CD4-positive, alpha-beta memory T cell (primary cell): ENCODE measurements at regions of chr21 and their contacts with region 1.

Region 1: GRCh38 chr21:15514073-15514946 is 215.5 kb upstream of the USP25 start:
- DNase-seq: peak; percentile 74 to 84 (median 77)
- H3K4me3 ChIP-seq: peak overlapping the region in 1 of 2 donors; percentile 39
- H3K4me3 Mint-ChIP-seq: peak overlapping the region; percentile 31 to 86 (median 66)
- H3K27ac ChIP-seq: peak overlapping the region; percentile 30
- H3K27ac Mint-ChIP-seq: peak overlapping the region; percentile 19 to 94 (median 87)
- H3K4me1 ChIP-seq: peaks cover 33% of the 10 kb centered on the region
- H3K4me1 Mint-ChIP-seq: peaks cover 17 to 26% (median 23%) of the 10 kb centered on the region in 4 donors
- H3K27me3 ChIP-seq: no peaks in the 10 kb centered on the region
- H3K27me3 Mint-ChIP-seq: no peaks in the 10 kb centered on the region

Region 2: DNA sequence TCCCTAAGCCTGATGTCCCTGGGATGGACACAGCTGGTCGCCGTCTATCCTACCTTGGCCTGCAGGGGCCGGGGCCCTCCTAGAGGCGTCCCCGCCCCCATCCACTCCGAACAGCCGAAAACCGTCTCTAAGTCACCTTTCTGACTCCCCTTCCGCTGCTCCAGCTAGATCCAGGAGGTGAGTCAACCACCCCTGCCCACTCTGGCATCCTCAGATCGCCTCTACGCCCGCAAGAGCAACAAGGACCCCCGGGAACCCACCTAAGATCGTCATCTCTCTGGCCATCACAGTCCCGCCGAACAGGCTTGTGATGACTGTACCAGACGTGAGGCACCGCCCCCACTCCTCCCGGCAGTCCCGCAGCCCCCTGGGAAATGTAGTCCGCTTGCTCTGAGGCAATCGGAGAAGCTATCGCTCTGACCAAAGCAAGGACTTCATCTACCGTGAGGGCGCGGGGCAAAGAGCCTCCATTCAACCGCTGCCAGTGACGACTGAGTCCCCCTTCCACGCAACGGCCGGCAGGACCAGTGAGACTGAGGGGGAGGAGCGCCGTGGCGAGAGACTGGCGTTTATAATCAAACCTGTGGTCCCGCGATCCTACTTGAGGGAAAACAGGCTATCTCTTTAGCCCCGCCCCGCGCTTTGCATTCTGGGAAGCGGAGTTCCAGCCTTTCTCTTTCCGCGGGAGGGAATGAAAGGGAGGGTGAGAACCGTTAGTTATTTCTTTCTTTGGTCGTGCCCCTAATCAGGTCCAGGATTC is 1131.3 kb before region 1 on chr21 and contains the start of gene HSPA13:
- CTCF ChIA-PET with region 1: no interaction called
- POLR2A ChIA-PET with region 1: no interaction called
- intact Hi-C with region 1: loop called (anchors 1 kb)
- DNase-seq: peak; percentile 98 to 100 (median 99)
- H3K4me3 ChIP-seq: peak within 1 kb of the TSS; percentile 77 to 80
- H3K4me3 Mint-ChIP-seq: peak within 1 kb of the TSS; percentile 98 to 100 (median 100)
- H3K27ac ChIP-seq: peak within 1 kb of the TSS; percentile 84
- H3K27ac Mint-ChIP-seq: peak within 1 kb of the TSS; percentile 99 to 100 (median 100)
- H3K4me1 ChIP-seq: peaks cover 35% of the 10 kb centered on the region
- H3K4me1 Mint-ChIP-seq: peaks cover 16 to 51% (median 32%) of the 10 kb centered on the region in 4 donors
- H3K27me3 ChIP-seq: no peaks in the 10 kb centered on the region
- H3K27me3 Mint-ChIP-seq: no peaks in the 10 kb centered on the region
- total RNA-seq, gene HSPA13: 32.0 to 38.5 TPM

Region 3: GRCh38 chr21:15531974-15532373 is 17.7 kb after region 1 on chr21:
- CTCF ChIA-PET with region 1: no interaction called
- POLR2A ChIA-PET with region 1: no interaction called
- intact Hi-C with region 1: loop called (anchors 2 kb)
- DNase-seq: no peak
- H3K4me3 ChIP-seq: no peak overlapping the region
- H3K4me3 Mint-ChIP-seq: no peak overlapping the region
- H3K27ac ChIP-seq: no peak overlapping the region
- H3K27ac Mint-ChIP-seq: no peak overlapping the region
- H3K4me1 ChIP-seq: peaks cover 2% of the 10 kb centered on the region
- H3K4me1 Mint-ChIP-seq: peaks cover 1 to 4% (median 3%) of the 10 kb centered on the region in 4 donors
- H3K27me3 ChIP-seq: no peaks in the 10 kb centered on the region
- H3K27me3 Mint-ChIP-seq: peaks cover 6 to 10% of the 10 kb centered on the region in 2 donors

Region 4: DNA sequence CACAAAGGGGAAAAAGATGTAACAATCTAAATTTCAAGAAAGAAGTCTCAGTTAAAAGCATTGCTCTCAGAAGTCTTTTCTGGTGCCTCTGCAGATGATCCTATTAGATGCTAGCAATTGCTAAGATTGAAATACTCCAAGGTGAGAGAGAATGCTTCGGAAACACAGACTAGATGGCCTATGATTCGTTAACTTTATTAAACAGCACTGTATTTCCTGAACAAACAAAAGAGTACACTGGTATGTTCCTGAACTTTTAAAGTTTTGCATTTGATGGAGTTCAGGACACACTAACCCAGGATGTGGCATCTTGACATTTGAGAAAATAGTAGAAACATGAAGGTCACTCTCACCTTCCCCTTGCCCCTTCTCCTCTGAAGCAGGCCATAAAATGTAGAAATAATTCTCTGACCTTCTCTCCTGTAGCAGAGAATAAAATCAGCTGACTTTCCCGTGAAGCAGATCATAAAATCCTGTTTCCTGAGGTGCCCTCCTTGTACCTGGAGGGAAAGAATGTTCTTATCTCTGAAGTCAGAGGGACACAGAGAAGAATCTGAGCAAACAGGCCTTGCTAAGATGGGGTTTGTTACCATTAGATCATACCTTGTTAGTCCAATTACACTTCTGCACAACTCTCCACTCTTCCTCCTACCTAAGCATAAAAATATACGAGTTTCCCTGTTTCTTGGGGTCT is 72.6 kb after region 1 on chr21:
- CTCF ChIA-PET with region 1: no interaction called
- POLR2A ChIA-PET with region 1: no interaction called
- intact Hi-C with region 1: no loop called
- DNase-seq: no peak
- H3K4me3 ChIP-seq: no peak overlapping the region
- H3K4me3 Mint-ChIP-seq: no peak overlapping the region
- H3K27ac ChIP-seq: no peak overlapping the region
- H3K27ac Mint-ChIP-seq: no peak overlapping the region
- H3K4me1 ChIP-seq: no peaks in the 10 kb centered on the region
- H3K4me1 Mint-ChIP-seq: no peaks in the 10 kb centered on the region
- H3K27me3 ChIP-seq: no peaks in the 10 kb centered on the region
- H3K27me3 Mint-ChIP-seq: no peaks in the 10 kb centered on the region